Mammary epithelial cell (primary cell): ENCODE measurements at regions of chr6 and their contacts with region 1.

Region 1: DNA sequence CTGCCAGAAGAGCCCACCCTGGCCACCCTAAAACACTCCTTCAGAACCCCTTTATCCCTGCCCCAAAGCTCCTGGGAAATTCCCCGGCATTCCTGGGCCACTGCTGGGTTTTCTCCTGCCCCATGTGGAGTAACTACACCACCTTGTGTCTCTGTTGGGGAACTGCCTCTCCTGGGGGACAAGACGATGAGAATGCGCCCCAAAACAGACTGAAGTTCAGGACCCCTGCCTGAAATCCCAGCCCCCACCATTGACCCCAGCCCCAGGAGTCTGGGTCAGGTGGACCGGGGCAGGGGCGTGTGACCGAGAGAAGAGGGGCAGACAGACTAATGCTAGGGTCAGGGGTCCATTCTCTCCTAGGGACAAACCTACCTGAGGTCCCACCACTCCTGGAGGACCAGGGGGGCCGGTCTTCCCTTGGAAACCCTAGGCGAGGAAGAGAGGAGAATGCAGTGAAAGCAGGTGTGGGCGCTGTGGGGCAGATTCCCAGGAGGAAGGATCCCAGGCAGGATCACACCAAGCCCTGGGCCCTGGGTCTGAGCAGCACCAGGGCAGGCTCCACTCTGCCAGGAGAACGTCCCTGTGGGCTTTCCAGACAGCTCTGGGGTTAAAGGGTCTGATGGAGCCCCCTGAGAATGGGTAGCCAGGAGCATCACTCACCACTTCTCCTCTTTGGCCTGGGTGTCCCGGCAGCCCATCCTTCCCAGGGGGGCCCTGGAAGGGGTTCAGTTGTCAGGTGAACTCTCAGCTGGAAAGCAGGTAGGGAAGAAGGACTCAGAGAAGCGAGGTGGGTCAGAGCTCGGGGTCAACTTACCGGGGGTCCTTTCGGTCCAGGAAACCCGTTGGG is 19.4 kb downstream of the COL11A2 start:
- DNase-seq: peak; percentile 29
- H3K4me3 ChIP-seq: no peak overlapping the region
- H3K27ac ChIP-seq: no peak overlapping the region
- H3K4me1 ChIP-seq: no peaks in the 10 kb centered on the region
- H3K27me3 ChIP-seq: no peaks in the 10 kb centered on the region
- CTCF ChIP-seq: peak; percentile 78 to 89

Region 2: DNA sequence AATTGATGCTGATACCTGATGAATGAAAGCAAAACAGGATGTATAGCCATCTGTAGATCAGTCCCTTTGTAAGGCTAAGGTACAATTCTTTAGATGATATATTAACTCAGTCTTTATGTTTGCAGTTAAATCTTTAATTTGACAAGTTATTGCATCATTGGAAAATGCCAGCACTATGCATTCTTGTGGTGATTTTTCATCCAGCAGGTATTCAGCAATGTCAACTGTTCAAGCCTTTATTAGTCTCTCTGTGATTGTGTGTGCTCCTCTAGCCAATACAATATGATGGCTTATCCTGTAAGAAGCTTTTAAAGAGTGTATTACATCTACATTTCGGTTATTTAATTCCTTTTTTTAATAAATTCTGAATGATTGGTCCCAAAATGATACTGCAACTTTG is 266.4 kb before region 1 on chr6:
- CTCF ChIA-PET with region 1: no interaction called
- dilution Hi-C with region 1: no loop called
- in situ Hi-C with region 1: no loop called
- intact Hi-C with region 1: no loop called
- DNase-seq: peak; percentile 46
- H3K4me3 ChIP-seq: no peak overlapping the region
- H3K27ac ChIP-seq: no peak overlapping the region
- H3K4me1 ChIP-seq: peaks cover 8% of the 10 kb centered on the region
- H3K27me3 ChIP-seq: no peaks in the 10 kb centered on the region
- CTCF ChIP-seq: no peak

Region 3: DNA sequence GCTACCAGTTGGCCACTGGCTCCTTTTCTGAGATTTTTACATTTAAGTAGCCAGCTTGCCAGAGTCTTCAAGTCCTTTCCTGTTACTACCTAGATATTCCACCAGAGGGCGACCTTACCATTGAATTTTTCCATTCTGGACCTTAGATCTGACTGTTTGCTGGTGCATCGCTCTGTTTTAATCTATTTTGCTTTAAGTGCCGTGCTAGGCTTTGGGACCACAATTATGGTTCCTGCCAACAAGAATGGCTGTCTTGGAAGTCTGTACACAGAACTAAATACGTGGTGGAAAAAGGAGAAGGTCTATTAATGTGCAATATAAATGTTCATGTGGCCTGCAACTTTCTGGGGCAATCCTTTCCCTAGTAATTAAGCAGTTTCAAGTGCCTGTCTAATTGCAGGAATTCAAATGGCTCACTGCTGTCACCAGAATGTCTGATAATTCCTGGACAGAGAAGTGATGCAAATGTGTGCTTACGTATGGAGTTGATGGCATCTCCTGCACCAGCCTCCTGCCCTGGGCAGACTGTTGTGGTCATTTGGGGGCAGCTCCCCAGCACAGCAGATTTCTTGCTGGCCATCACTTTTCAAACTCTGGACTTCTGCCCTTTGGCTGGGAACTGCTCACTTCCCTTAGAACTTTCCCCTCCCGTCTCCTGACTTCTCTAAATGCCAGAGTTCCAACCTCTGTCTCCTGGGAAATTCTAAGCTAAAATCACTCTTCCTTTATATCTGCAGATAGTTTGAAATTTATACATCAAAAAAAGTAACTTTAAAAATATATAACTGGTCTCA is 157.9 kb before region 1 on chr6:
- CTCF ChIA-PET with region 1: no interaction called
- dilution Hi-C with region 1: no loop called
- in situ Hi-C with region 1: no loop called
- intact Hi-C with region 1: loop called (anchors 1 kb)
- DNase-seq: peak; percentile 52
- H3K4me3 ChIP-seq: no peak overlapping the region
- H3K27ac ChIP-seq: no peak overlapping the region
- H3K4me1 ChIP-seq: no peaks in the 10 kb centered on the region
- H3K27me3 ChIP-seq: peaks cover 11% of the 10 kb centered on the region
- CTCF ChIP-seq: peak; percentile 67 to 73

Region 4: GRCh38 chr6:33118525-33119123 is 54.3 kb before region 1 on chr6:
- CTCF ChIA-PET with region 1: no interaction called
- dilution Hi-C with region 1: no loop called
- in situ Hi-C with region 1: no loop called
- intact Hi-C with region 1: loop called (anchors 1 kb)
- DNase-seq: peak; percentile 39
- H3K4me3 ChIP-seq: no peak overlapping the region
- H3K27ac ChIP-seq: no peak overlapping the region
- H3K4me1 ChIP-seq: no peaks in the 10 kb centered on the region
- H3K27me3 ChIP-seq: peaks cover 13% of the 10 kb centered on the region
- CTCF ChIP-seq: peak; percentile 58 to 68

Region 5: GRCh38 chr6:33123732-33124524 is 49.0 kb before region 1 on chr6:
- CTCF ChIA-PET with region 1: no interaction called
- dilution Hi-C with region 1: no loop called
- in situ Hi-C with region 1: no loop called
- intact Hi-C with region 1: loop called (anchors 1 kb)
- DNase-seq: no peak
- H3K4me3 ChIP-seq: no peak overlapping the region
- H3K27ac ChIP-seq: no peak overlapping the region
- H3K4me1 ChIP-seq: no peaks in the 10 kb centered on the region
- H3K27me3 ChIP-seq: no peaks in the 10 kb centered on the region
- CTCF ChIP-seq: peak; percentile 49 to 53

Region 6: GRCh38 chr6:33235221-33235634 is 62.3 kb after region 1 on chr6:
- CTCF ChIA-PET with region 1: no interaction called
- dilution Hi-C with region 1: loop called (anchors 5 kb)
- in situ Hi-C with region 1: no loop called
- intact Hi-C with region 1: no loop called
- DNase-seq: no peak
- H3K4me3 ChIP-seq: no peak overlapping the region
- H3K27ac ChIP-seq: no peak overlapping the region
- H3K4me1 ChIP-seq: no peaks in the 10 kb centered on the region
- H3K27me3 ChIP-seq: no peaks in the 10 kb centered on the region
- CTCF ChIP-seq: no peak

Region 7: GRCh38 chr6:33425668-33426577 is 253.0 kb after region 1 on chr6:
- CTCF ChIA-PET with region 1: no interaction called
- dilution Hi-C with region 1: no loop called
- in situ Hi-C with region 1: no loop called
- intact Hi-C with region 1: no loop called
- DNase-seq: peak; percentile 82
- H3K4me3 ChIP-seq: peak overlapping the region; percentile 55 to 72 (median 68)
- H3K27ac ChIP-seq: peak overlapping the region; percentile 68
- H3K4me1 ChIP-seq: peaks cover 42% of the 10 kb centered on the region
- H3K27me3 ChIP-seq: no peaks in the 10 kb centered on the region
- CTCF ChIP-seq: peak; percentile 36 to 81